ENCODE measurements at regions of chr3 and their contacts with region 1.

Region 1: GRCh38 chr3:13884851-13885703 is 5.2 kb upstream of the WNT7A start:
- DNase-seq: peak in 1 of 2 experiments; percentile 53
- ATAC-seq: peak in 1 of 2 experiments; percentile 74; a peak in 3 of 6 replicates
- H3K4me3 ChIP-seq: no peak overlapping the region
- H3K27ac ChIP-seq: no peak overlapping the region
- H3K4me1 ChIP-seq: peaks cover 8% of the 10 kb centered on the region
- CTCF ChIP-seq: peak; percentile 66
- EP300 ChIP-seq: no peak
- POLR2A ChIP-seq: no peak
- RAD21 ChIP-seq: peak; percentile 58 to 81

Region 2: GRCh38 chr3:13657660-13658435 is 227.2 kb before region 1 on chr3:
- CTCF ChIA-PET with region 1: interaction called, 260 read pairs
- POLR2A ChIA-PET with region 1: interaction called, 4 read pairs
- DNase-seq: peak; percentile 45 to 95
- ATAC-seq: peak; percentile 82 to 94
- H3K4me3 ChIP-seq: no peak overlapping the region
- H3K27ac ChIP-seq: no peak overlapping the region
- H3K4me1 ChIP-seq: peaks cover 4% of the 10 kb centered on the region; the same call in 1 of the 3 replicates
- CTCF ChIP-seq: peak; percentile 70
- EP300 ChIP-seq: no peak
- POLR2A ChIP-seq: no peak
- RAD21 ChIP-seq: peak; percentile 79 to 87

Region 3: DNA sequence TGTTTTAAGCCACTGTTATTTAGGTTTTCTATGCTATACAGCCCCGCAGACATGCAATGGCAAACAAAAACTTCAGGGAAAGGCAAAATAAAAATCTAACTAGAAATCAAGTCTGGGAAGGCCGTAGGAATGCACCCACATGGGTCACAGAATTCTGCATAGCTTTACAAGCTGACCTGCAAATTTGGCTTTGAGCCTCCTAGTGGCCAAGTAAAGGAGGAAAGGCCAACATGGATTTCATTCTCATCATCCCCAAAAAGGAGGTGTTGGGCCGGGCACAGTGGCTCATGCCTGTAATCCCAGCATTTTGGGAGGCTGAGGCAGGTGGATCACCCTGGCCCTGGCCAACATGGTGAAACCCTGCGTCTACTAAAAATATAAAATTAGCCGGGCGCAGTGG is 211.9 kb before region 1 on chr3:
- CTCF ChIA-PET with region 1: interaction called, 10 read pairs
- POLR2A ChIA-PET with region 1: no interaction called
- DNase-seq: peak in 1 of 2 experiments; percentile 50
- ATAC-seq: peak in 1 of 2 experiments; percentile 62; a peak in 3 of 6 replicates
- H3K4me3 ChIP-seq: no peak overlapping the region
- H3K27ac ChIP-seq: no peak overlapping the region
- H3K4me1 ChIP-seq: no peaks in the 10 kb centered on the region
- CTCF ChIP-seq: 0 out of 3 replicates have a peak, but pooled peaks have one; percentile 8
- EP300 ChIP-seq: no peak
- POLR2A ChIP-seq: no peak
- RAD21 ChIP-seq: no peak

Region 4: GRCh38 chr3:13872451-13872850 is 12.6 kb before region 1 on chr3:
- CTCF ChIA-PET with region 1: interaction called, 12 read pairs
- POLR2A ChIA-PET with region 1: no interaction called
- DNase-seq: no peak
- ATAC-seq: no peak
- H3K4me3 ChIP-seq: no peak overlapping the region
- H3K27ac ChIP-seq: no peak overlapping the region
- H3K4me1 ChIP-seq: no peaks in the 10 kb centered on the region
- CTCF ChIP-seq: no peak
- EP300 ChIP-seq: no peak
- POLR2A ChIP-seq: no peak
- RAD21 ChIP-seq: no peak

Region 5: DNA sequence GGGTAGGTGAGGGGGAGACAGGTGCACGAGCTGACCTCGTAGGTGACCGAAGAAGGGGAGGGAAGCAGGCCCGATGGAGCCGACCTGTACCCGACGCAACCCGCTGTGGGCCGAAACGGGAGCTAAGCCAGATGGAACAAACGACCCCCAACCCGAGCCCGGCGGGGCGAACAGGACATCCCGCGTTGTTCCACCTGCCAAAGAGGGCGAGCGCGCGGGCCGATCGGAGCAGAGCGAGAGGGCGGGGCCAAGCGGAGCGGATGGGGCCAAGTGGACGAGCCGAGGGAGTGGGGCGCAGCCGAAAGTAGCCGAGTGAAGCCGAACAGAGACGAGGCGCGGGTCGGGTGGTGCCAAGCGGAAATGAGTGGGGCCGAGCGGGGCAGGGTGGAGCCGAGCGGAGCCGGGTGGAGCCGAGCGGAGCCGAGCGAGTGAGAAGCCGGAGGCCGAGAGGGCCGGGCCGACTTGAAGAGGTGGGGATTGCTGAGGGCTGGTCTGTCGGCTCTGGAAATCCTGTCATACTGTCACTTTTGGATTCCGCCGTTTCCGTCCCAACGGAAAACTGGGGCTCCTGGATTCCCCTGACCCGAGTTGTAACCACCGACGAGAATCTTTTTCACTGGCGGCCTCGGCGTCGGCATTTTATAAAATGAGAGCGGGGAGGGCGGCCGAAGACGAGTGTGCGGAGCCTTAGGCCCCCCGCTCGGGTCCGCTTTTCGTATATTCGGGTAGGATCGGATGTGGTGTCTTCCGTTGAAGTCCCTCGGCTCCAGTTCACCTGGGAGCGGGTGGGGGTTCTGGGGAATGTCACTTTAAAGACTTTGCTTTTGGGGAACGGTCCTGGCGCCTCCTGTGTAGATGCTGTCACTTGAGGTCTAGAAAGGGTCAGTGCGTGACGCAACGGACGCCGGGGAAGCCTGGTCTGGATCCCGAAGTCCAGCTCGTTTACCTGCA is 10.4 kb after region 1 on chr3:
- CTCF ChIA-PET with region 1: interaction called, 26 read pairs
- POLR2A ChIA-PET with region 1: no interaction called
- DNase-seq: peak; percentile 74 to 82
- ATAC-seq: peak; percentile 97 to 99
- H3K4me3 ChIP-seq: peak overlapping the region; percentile 60
- H3K27ac ChIP-seq: peak overlapping the region; percentile 72 to 83
- H3K4me1 ChIP-seq: peaks cover 5% of the 10 kb centered on the region; the same call in 1 of the 3 replicates
- CTCF ChIP-seq: no peak
- EP300 ChIP-seq: no peak
- POLR2A ChIP-seq: no peak
- RAD21 ChIP-seq: no peak

Region 6: DNA sequence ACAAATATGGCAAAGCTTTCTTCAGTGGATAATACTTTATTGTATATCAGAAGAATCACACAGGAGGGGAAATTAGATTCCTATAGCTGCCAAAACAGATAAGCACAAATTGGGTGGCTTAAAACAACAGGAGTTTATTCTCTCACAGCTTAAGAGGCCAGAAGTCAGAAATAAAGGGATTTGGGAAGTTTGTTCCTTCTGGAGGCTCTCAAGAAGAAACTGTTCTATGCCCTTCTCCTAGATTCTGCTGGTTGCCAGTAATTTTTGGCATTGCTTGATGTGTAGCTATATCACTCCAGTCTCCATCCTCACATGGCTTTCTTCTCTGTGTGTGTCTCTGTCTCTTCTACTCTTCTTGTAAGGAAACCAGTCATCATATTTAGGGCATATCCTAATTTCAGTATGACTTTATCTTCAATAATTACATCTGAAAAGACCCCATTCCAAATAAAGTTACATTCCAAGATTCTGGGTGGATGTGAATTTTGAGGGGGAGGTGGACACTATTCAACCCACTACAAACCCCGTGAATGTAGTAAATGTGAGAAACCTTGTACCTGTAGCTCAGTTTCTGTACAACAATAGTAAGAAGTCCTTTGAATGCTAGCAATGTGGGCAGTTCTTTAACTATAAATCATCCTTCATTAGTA is 17.0 kb after region 1 on chr3:
- CTCF ChIA-PET with region 1: interaction called, 26 read pairs
- POLR2A ChIA-PET with region 1: no interaction called
- DNase-seq: no peak
- ATAC-seq: no peak
- H3K4me3 ChIP-seq: no peak overlapping the region
- H3K27ac ChIP-seq: no peak overlapping the region
- H3K4me1 ChIP-seq: no peaks in the 10 kb centered on the region
- CTCF ChIP-seq: no peak
- EP300 ChIP-seq: no peak
- POLR2A ChIP-seq: no peak
- RAD21 ChIP-seq: no peak